ENCODE measurements at regions of chr5 and their contacts with region 1.

Region 1: DNA sequence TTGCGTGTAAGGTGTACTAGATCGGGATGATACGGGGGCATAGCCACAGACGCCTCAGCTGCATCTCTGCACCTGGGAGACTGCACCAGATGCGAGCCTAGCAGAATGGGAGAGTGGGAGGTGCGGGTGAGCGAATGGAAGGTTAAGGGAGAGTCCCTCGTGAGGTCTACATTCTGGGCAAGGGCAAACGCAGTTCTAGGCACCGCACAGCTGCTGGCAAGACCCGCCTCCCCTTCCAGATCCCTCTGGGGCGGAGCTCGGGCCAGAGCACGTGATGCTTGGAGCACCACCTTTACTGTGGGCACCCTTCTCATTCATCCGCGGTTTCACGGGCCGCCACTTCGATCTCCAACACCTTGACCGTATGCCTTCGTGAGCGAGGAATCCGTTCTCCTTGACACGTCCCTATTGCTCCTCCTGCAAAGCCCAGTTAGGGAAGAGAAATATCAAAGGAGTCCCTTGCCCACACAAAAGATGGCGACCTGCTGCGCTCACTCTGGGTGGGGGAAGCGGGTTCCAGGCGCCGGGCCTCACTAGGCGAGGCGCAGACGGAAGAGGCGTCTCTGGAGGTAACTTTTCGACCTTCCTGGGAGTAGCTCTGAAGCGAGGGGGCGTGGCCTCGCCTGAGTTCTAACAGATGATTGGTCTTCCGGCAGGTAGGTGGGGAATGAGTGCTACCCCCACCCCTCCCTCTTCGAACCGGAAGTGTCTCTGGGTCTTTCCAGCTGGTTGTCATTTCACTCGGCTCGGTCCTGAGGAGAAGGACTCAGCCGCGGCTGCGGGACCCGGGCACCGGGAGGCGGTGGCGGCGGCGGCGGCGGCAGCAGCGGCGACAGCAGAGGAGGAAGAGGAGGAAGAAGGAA is at the start of gene CPEB4:
- DNase-seq: peak; percentile 98
- ATAC-seq: peak; percentile 96
- H3K4me3 Mint-ChIP-seq: peak within 1 kb of the TSS; percentile 94
- H3K27ac Mint-ChIP-seq: peak within 1 kb of the TSS; percentile 100
- H3K4me1 Mint-ChIP-seq: peaks cover 53% of the 10 kb centered on the region
- H3K27me3 Mint-ChIP-seq: peaks cover 3% of the 10 kb centered on the region; the same call in 1 of the 2 replicates
- CTCF ChIP-seq: no peak
- total RNA-seq, gene CPEB4: 9.1 to 12.7 TPM (median 9.2 TPM) in 3 replicates

Region 2: GRCh38 chr5:173963867-173964441 is 76.1 kb after region 1 on chr5:
- CTCF ChIA-PET with region 1: interaction called, 6 read pairs
- POLR2A ChIA-PET with region 1: interaction called, 10 read pairs
- DNase-seq: peak; percentile 61
- ATAC-seq: peak; percentile 83
- H3K4me3 Mint-ChIP-seq: peak overlapping the region; percentile 41; the same call in 1 of the 2 replicates
- H3K27ac Mint-ChIP-seq: peak overlapping the region; percentile 90
- H3K4me1 Mint-ChIP-seq: peaks cover 48% of the 10 kb centered on the region
- H3K27me3 Mint-ChIP-seq: no peaks in the 10 kb centered on the region
- CTCF ChIP-seq: no peak

Region 3: DNA sequence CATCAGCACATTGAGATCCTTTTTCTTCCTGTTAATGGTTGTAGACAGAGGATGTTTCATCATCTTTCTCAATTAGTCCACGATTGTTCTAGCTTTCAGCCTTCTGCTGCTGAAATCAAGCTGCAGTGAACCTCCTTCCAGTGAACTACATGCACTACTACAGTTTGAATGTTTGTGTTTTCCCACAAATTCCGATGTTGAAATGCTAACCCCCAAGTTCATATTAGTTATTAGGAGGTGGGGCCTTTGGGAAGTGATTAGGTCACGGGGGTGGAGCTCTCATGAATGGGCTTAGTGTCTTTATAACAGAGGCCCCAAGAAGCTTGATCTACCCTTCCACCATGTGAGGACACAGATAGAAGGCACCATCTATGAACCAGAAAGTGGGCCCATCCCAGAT is 190.6 kb after region 1 on chr5:
- CTCF ChIA-PET with region 1: no interaction called
- POLR2A ChIA-PET with region 1: no interaction called
- DNase-seq: no peak
- ATAC-seq: no peak
- H3K4me3 Mint-ChIP-seq: no peak overlapping the region
- H3K27ac Mint-ChIP-seq: no peak overlapping the region
- H3K4me1 Mint-ChIP-seq: no peaks in the 10 kb centered on the region
- H3K27me3 Mint-ChIP-seq: no peaks in the 10 kb centered on the region
- CTCF ChIP-seq: no peak

Measured in WTC11 (cell line).